B cell (primary cell): ENCODE measurements at regions of chr11 and their contacts with region 1.

Region 1: DNA sequence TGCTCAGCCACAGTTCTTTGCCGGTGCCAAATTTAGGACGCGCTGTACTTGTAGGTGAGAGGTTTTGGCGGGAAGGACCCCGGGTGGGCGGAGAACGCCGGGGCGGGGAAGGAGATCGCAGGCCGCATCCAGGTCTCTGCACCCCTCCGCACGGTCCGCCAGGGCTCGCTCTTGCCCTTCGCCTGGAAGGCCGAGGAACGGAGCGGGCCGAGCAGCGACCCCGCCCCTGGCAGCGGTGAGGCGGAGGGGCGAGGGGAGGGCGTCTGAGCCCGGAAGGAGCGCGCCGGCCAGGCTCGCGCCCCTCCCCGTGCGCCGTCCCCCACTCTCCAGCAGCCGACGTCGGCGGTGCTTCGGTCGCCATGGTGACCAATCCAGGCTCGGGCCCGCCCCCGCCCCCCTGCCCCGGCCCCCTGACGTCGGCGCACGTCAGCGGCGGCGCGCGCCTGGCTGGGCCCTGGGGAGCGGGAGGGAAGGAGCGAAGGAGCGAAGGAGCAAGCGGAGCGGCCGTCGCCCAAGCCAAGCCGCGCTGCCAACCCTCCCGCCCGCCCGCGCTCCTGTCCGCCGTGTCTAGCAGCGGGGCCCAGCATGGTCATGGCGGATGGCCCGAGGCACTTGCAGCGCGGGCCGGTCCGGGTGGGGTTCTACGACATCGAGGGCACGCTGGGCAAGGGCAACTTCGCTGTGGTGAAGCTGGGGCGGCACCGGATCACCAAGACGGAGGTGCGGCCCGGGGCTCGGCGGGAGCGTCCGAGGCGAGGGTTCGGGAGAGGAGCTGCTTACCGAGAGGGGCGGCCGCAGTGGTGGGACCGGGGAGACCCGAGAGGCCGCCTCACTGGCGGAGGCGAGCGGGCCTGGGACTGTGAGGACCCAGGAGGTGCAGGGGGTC is at the start of gene SIK2:
- DNase-seq: peak; percentile 96
- ATAC-seq: peak; percentile 93
- H3K4me3 ChIP-seq: peak within 1 kb of the TSS; percentile 75 to 96 (median 88)
- H3K4me3 Mint-ChIP-seq: peak within 1 kb of the TSS; percentile 98
- H3K27ac ChIP-seq: peak within 1 kb of the TSS; percentile 84 to 92
- H3K27ac Mint-ChIP-seq: peak within 1 kb of the TSS; percentile 94
- H3K4me1 ChIP-seq: peaks cover 14 to 21% of the 10 kb centered on the region in 2 donors
- H3K4me1 Mint-ChIP-seq: peaks cover 18% of the 10 kb centered on the region
- H3K27me3 ChIP-seq: no peaks in the 10 kb centered on the region
- H3K27me3 Mint-ChIP-seq: no peaks in the 10 kb centered on the region
- CTCF ChIP-seq: peak; percentile 77
- total RNA-seq, gene SIK2: 20.4 and 21.8 TPM in 2 replicates

Region 2: GRCh38 chr11:111586388-111586831 is 15.8 kb before region 1 on chr11:
- CTCF ChIA-PET with region 1: interaction called, 15 read pairs
- POLR2A ChIA-PET with region 1: no interaction called
- intact Hi-C with region 1: loop called (anchors 2 kb)
- DNase-seq: peak; percentile 75
- ATAC-seq: peak; percentile 57
- H3K4me3 ChIP-seq: no peak overlapping the region
- H3K4me3 Mint-ChIP-seq: no peak overlapping the region
- H3K27ac ChIP-seq: no peak overlapping the region
- H3K27ac Mint-ChIP-seq: no peak overlapping the region
- H3K4me1 ChIP-seq: no peaks in the 10 kb centered on the region
- H3K4me1 Mint-ChIP-seq: peaks cover 5% of the 10 kb centered on the region
- H3K27me3 ChIP-seq: no peaks in the 10 kb centered on the region
- H3K27me3 Mint-ChIP-seq: no peaks in the 10 kb centered on the region
- CTCF ChIP-seq: peak; percentile 85

Region 3: DNA sequence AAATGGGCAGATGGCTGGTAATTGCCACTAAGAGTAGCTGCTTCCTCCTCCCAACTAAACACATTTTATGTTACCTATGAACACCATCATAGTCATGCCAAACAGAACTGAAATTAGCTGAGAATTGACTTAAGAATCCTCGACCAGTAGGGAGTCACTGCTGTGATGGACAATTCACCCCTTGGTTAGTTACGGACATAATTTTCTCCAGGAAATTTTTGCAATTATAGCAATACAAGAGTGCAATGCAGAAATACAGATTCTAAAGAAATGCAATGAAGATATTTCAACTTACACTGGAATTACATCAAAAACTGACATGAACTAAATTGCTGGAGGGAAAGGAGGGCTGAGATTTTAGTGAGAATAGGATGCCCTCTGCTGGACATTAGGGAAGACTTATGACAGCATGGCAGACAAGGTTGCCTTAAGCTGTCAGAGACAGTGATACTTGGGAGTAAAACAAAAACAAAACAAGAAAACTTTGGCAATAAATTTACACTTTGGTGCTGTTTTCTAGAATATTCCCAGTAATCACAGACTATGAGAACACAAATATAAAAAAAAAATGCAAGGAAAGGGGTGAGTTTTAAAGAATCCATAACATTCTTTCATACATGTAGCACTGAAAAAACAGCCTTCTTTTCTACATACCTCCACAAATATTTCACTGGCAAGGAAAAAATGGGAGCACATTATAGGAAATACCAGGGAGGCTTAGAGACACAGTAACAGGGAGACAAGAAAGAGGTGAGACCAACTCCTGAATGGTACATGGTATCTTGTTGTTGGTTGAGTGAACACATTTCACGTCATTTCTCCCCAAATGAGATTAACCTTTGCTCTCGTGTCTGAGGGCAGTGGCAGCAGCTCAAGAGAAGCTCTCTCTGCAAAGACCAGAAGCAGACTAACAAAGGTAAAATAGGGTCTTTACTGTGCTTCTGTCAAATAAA is 175.1 kb after region 1 on chr11:
- CTCF ChIA-PET with region 1: interaction called, 24 read pairs
- POLR2A ChIA-PET with region 1: interaction called, 3 read pairs
- intact Hi-C with region 1: loop called (anchors 1 kb)
- DNase-seq: peak; percentile 79
- ATAC-seq: peak; percentile 61
- H3K4me3 ChIP-seq: peak overlapping the region in 1 of 5 experiments; percentile 32
- H3K4me3 Mint-ChIP-seq: peak overlapping the region; percentile 82
- H3K27ac ChIP-seq: peak overlapping the region; percentile 63 to 76
- H3K27ac Mint-ChIP-seq: peak overlapping the region; percentile 91
- H3K4me1 ChIP-seq: peaks cover 17 to 21% of the 10 kb centered on the region in 2 donors
- H3K4me1 Mint-ChIP-seq: peaks cover 23% of the 10 kb centered on the region
- H3K27me3 ChIP-seq: no peaks in the 10 kb centered on the region
- H3K27me3 Mint-ChIP-seq: no peaks in the 10 kb centered on the region
- CTCF ChIP-seq: peak; percentile 81

Region 4: GRCh38 chr11:111870886-111871692 is 268.9 kb after region 1 on chr11 and contains the start of gene ALG9:
- CTCF ChIA-PET with region 1: interaction called, 5 read pairs
- POLR2A ChIA-PET with region 1: interaction called, 5 read pairs
- intact Hi-C with region 1: loop called (anchors 1 kb)
- DNase-seq: peak; percentile 94
- ATAC-seq: peak; percentile 94
- H3K4me3 ChIP-seq: peak within 1 kb of the TSS; percentile 62 to 81 (median 80)
- H3K4me3 Mint-ChIP-seq: peak within 1 kb of the TSS; percentile 94
- H3K27ac ChIP-seq: peak within 1 kb of the TSS; percentile 72 to 91
- H3K27ac Mint-ChIP-seq: peak within 1 kb of the TSS; percentile 94
- H3K4me1 ChIP-seq: peaks cover 13 to 14% of the 10 kb centered on the region in 2 donors
- H3K4me1 Mint-ChIP-seq: peaks cover 17% of the 10 kb centered on the region
- H3K27me3 ChIP-seq: no peaks in the 10 kb centered on the region
- H3K27me3 Mint-ChIP-seq: no peaks in the 10 kb centered on the region
- CTCF ChIP-seq: no peak
- total RNA-seq, gene ALG9: 23.9 and 29.9 TPM in 2 replicates

Region 5: GRCh38 chr11:112280268-112281126 is 678.3 kb after region 1 on chr11:
- CTCF ChIA-PET with region 1: no interaction called
- POLR2A ChIA-PET with region 1: no interaction called
- intact Hi-C with region 1: loop called (anchors 1 kb)
- DNase-seq: peak; percentile 87
- ATAC-seq: peak; percentile 93
- H3K4me3 ChIP-seq: peak overlapping the region; percentile 59 to 80 (median 69)
- H3K4me3 Mint-ChIP-seq: peak overlapping the region; percentile 98
- H3K27ac ChIP-seq: peak overlapping the region in 1 of 2 donors; percentile 20
- H3K27ac Mint-ChIP-seq: peak overlapping the region; percentile 87
- H3K4me1 ChIP-seq: peaks cover 7 to 15% of the 10 kb centered on the region in 2 donors
- H3K4me1 Mint-ChIP-seq: peaks cover 18% of the 10 kb centered on the region
- H3K27me3 ChIP-seq: no peaks in the 10 kb centered on the region
- H3K27me3 Mint-ChIP-seq: no peaks in the 10 kb centered on the region
- CTCF ChIP-seq: peak; percentile 64